ENCODE measurements at regions of chr16 and their contacts with region 1.

Region 1: DNA sequence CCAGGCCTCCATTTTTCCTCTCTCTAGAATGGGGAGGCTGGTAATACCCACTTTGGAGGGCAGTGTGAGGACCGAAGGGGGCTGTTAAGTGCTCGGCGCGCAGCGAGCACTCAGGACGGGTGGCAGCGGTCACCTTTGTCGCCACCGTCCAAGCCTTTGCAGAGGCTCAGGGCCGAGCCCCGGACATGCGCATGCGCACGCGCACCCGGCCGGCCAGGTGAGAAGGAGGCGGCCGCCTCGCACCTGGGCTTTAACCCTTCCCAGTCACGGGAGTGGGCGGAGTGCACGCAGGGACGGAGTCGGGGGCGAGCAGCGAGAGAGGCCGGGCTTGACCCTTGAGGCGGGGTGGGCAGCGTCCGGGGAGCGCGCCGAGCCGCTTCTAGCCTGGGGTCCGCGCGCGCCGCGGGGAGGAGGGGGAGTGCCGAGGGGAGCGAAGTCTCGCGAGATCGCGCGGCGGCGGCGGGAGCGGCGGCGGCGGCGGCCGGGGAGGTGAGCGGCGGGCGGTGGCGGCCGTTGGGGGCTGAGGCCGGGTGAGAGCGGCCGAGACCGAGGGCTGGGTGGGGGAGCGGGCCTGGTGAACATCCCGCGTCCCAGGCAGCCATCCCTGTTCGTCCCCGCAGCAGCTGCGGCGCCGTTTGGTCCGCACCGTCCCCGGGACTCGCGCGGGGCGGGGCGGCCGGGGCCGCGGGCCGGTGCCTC is at the start of gene MRTFB:
- DNase-seq: peak; percentile 89
- ATAC-seq: peak; percentile 89
- H3K4me3 Mint-ChIP-seq: peak within 1 kb of the TSS; percentile 82
- H3K27ac Mint-ChIP-seq: peak within 1 kb of the TSS; percentile 81
- H3K4me1 Mint-ChIP-seq: peaks cover 14% of the 10 kb centered on the region
- H3K27me3 Mint-ChIP-seq: peaks cover 3% of the 10 kb centered on the region
- total RNA-seq, gene MRTFB: 9.6 to 16.9 TPM

Region 2: DNA sequence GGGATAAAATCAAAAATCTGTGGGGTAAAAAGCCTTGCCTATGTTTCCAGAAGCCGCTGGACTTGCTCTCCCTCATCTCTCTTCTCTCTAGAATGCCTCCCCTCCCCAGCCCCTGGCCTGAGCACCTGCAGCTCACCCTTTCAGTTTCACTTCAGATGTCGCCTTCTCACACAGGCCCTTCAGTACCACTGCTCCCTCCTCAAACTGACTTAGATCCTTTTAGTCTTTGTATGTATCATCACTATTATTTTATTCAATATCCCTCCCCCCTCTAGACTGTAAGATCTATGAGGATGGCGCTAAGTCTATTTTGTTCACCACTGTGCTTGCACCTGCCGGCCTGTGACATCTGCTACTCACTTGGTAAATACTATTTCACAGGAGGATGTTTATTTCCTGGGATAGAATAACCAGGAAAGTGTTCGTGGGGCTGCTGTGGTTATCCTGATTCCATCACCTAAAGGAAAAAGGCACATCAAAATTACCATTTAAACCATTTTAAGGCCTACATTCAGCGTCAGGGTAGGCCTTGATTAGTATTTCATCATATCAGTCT is 122.4 kb after region 1 on chr16:
- CTCF ChIA-PET with region 1: no interaction called
- POLR2A ChIA-PET with region 1: no interaction called
- intact Hi-C with region 1: loop called in 1 of 2 experiments (anchors 2 kb)
- DNase-seq: peak; percentile 66
- ATAC-seq: peak; percentile 97
- H3K4me3 Mint-ChIP-seq: peak overlapping the region; percentile 64
- H3K27ac Mint-ChIP-seq: peak overlapping the region; percentile 84
- H3K4me1 Mint-ChIP-seq: peaks cover 40% of the 10 kb centered on the region
- H3K27me3 Mint-ChIP-seq: no peaks in the 10 kb centered on the region

Region 3: GRCh38 chr16:14244196-14245010 is 173.4 kb after region 1 on chr16:
- CTCF ChIA-PET with region 1: interaction called, 4 read pairs
- POLR2A ChIA-PET with region 1: no interaction called
- intact Hi-C with region 1: loop called in 1 of 2 experiments (anchors 1 kb)
- DNase-seq: peak; percentile 8
- ATAC-seq: peak; percentile 80
- H3K4me3 Mint-ChIP-seq: no peak overlapping the region
- H3K27ac Mint-ChIP-seq: peak overlapping the region; percentile 81
- H3K4me1 Mint-ChIP-seq: peaks cover 9% of the 10 kb centered on the region
- H3K27me3 Mint-ChIP-seq: no peaks in the 10 kb centered on the region

Region 4: DNA sequence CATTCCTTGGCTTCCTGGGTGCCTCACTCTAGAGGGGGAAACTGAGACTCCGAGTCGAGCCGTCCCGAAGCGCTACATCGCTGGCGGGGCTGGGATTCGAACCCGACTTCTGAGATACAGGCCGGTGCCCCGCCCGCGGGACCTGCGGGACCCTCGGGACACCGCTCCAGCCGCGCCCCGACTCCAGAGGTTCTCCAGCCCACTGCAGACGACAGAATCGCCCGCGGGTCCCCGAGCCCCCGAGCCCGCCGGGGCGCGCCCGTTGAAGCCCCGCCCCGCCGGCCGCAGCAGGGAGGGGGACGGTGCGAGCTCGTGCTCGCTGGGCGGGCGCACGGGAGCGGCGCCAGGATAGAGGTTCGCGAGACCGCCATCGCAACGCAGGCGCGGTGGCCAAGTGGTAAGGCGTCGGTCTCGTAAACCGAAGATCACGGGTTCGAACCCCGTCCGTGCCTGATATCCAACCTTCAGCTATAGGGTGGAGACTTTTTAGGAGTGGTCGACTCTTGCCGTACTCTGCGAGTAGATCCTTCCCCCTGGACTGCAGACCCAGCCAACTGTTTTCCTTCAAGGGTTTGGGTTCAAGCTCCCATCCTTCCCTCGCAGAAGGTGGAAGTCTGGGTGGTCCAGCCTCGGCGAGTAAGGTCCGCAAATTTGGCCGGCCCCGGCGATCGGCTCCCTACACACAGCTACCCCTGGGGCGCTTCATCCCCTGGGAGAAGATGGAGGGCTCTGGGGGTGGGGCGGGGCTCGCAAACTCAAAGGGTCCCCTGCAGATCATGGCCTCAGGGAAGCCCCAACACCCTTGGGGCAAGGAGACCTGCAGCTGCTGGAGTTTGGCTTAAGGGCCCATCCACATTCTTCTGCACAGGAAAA is 214.7 kb after region 1 on chr16:
- CTCF ChIA-PET with region 1: no interaction called
- POLR2A ChIA-PET with region 1: no interaction called
- intact Hi-C with region 1: loop called (anchors 1 to 5 kb)
- DNase-seq: peak; percentile 95
- ATAC-seq: peak; percentile 78
- H3K4me3 Mint-ChIP-seq: peak overlapping the region; percentile 80
- H3K27ac Mint-ChIP-seq: peak overlapping the region; percentile 84
- H3K4me1 Mint-ChIP-seq: peaks cover 13% of the 10 kb centered on the region
- H3K27me3 Mint-ChIP-seq: no peaks in the 10 kb centered on the region

Region 5: GRCh38 chr16:14529010-14529669 is 458.1 kb after region 1 on chr16:
- CTCF ChIA-PET with region 1: no interaction called
- POLR2A ChIA-PET with region 1: no interaction called
- intact Hi-C with region 1: loop called in 1 of 2 experiments (anchors 10 kb)
- DNase-seq: peak; percentile 74
- ATAC-seq: peak; percentile 58
- H3K4me3 Mint-ChIP-seq: no peak overlapping the region
- H3K27ac Mint-ChIP-seq: no peak overlapping the region
- H3K4me1 Mint-ChIP-seq: no peaks in the 10 kb centered on the region
- H3K27me3 Mint-ChIP-seq: no peaks in the 10 kb centered on the region

Measured in activated CD4-positive, alpha-beta T cell treated with anti-CD3 and anti-CD28 coated beads for 36 hours (primary cell).